Pancreas (tissue), 10 donors: ENCODE measurements at regions of chr5 and their contacts with region 1.

Region 1: DNA sequence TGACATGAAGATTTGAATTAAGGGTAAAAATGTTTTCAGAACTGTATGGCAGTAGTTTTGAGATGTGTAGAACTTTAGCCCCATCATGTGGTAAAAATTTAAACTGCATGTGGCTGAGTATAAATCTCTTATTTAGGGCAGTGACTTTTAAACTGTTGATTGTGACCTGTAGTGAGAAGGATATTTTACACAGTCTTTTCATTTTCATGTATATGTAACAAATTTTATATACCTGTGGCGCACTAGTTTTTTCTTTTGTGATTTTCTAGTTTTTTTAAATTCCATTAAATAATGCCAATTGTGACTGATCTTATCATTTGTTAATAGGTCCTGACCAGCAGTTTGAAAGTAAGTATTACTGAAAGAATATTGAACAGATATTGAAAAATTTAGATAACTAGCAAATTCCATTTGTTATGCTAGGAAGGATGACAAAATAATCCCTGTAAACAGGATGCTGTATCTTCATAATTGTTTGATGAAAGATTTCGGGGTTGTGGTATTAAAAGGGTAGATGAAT is 47.2 kb downstream of the GPBP1 start:
- DNase-seq: peak in 1 of 6 donors; percentile 25
- ATAC-seq: peak; percentile 73 to 87 (median 86)
- H3K4me3 ChIP-seq: no peak overlapping the region
- H3K27ac ChIP-seq: no peak overlapping the region
- H3K4me1 ChIP-seq: no peaks in the 10 kb centered on the region
- H3K27me3 ChIP-seq: no peaks in the 10 kb centered on the region
- CTCF ChIP-seq: peak; percentile 35 to 84 (median 77)

Region 2: GRCh38 chr5:56909294-56910209 is 311.6 kb before region 1 on chr5 and contains the start of gene SETD9:
- intact Hi-C with region 1: loop called in 2 of 3 experiments (anchors 10 kb)
- DNase-seq: peak; percentile 98 to 100 (median 99)
- ATAC-seq: peak; percentile 90 to 95 (median 91)
- H3K4me3 ChIP-seq: peak within 1 kb of the TSS; percentile 45 to 61 (median 54)
- H3K27ac ChIP-seq: peak within 1 kb of the TSS; percentile 86 to 99 (median 98)
- H3K4me1 ChIP-seq: peaks cover 0 to 8% (median 0%) of the 10 kb centered on the region in 3 donors
- H3K27me3 ChIP-seq: no peaks in the 10 kb centered on the region
- CTCF ChIP-seq: no peak
- total RNA-seq, gene SETD9: 4.6 to 9.7 (median 6.2) TPM

Region 3: DNA sequence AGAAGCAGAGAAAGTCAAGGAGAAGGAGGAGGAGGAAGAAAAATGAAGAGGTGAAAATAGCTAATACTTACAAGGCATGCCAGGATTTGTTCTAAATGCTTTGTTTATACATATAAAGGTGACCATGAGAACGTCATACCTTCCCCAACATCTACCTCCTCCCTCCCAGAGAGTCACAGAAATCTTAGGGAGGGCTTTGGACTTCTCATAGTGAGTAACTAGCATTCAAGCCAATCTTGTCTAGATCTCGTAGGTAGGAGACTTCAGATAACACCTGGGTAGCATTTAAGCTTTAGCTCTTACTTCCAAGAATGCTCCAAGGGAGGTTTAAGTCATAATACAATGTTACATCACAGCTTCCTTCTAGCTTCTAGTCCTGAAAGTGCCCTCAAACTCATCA is 83.7 kb before region 1 on chr5:
- intact Hi-C with region 1: loop called in 1 of 3 experiments (anchors 10 kb)
- DNase-seq: no peak
- ATAC-seq: no peak
- H3K4me3 ChIP-seq: no peak overlapping the region
- H3K27ac ChIP-seq: no peak overlapping the region
- H3K4me1 ChIP-seq: no peaks in the 10 kb centered on the region
- H3K27me3 ChIP-seq: no peaks in the 10 kb centered on the region
- CTCF ChIP-seq: no peak